Caco-2 (cell line): ENCODE measurements at regions of chr6 and their contacts with region 1.

Region 1: DNA sequence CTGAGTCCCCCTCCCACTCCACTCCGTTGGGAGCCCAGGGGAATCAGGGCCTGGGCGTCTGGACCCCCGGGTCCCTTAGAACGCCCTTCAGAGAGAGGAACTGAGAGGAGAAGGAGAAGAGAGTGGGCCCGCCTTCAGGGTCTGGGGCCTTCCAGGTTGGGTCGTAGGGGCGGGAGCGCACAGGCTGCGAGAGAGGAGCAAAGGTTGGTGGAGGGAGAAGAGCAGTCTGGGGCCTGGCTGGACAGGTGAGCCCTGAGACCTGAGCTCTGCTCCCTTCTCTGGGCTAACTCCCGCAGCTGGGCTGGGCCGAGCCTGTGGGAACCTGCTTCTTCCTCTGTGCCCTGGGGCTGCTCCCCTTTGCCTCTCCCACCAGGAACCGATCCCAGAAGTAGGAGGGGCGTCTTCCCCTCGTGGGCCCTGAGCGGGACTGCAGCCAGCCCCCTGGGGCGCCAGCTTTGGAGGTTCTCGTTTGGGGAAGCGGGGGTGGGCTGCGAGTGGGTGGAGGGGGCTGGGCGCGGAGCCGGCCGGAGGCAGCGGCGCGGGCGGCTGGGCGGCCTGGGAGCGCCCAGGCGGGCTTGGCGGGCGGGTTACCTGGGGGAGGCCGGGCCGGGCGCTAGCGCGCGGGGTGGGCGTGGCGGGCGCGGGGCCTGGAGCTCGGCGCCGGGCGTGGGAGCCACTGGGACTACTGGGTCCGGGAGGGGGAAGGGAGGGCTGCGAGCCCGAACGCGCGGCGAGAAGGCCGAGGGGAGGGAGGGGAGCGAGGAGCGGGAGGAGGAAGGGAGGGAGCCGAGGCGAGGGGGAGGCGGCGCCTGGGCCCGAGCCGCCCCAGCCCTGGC is at the start of gene DDR1:
- DNase-seq: peak; percentile 81 to 82
- H3K4me3 ChIP-seq: peak within 1 kb of the TSS; percentile 46
- H3K4me3 Mint-ChIP-seq: peak within 1 kb of the TSS; percentile 83
- H3K27ac Mint-ChIP-seq: peak within 1 kb of the TSS; percentile 82
- H3K4me1 ChIP-seq: peaks cover 39% of the 10 kb centered on the region
- H3K4me1 Mint-ChIP-seq: peaks cover 43% of the 10 kb centered on the region
- H3K27me3 ChIP-seq: no peaks in the 10 kb centered on the region
- H3K27me3 Mint-ChIP-seq: no peaks in the 10 kb centered on the region
- CTCF ChIP-seq: no peak
- total RNA-seq, gene DDR1: 113 and 115 TPM in 2 replicates

Region 2: DNA sequence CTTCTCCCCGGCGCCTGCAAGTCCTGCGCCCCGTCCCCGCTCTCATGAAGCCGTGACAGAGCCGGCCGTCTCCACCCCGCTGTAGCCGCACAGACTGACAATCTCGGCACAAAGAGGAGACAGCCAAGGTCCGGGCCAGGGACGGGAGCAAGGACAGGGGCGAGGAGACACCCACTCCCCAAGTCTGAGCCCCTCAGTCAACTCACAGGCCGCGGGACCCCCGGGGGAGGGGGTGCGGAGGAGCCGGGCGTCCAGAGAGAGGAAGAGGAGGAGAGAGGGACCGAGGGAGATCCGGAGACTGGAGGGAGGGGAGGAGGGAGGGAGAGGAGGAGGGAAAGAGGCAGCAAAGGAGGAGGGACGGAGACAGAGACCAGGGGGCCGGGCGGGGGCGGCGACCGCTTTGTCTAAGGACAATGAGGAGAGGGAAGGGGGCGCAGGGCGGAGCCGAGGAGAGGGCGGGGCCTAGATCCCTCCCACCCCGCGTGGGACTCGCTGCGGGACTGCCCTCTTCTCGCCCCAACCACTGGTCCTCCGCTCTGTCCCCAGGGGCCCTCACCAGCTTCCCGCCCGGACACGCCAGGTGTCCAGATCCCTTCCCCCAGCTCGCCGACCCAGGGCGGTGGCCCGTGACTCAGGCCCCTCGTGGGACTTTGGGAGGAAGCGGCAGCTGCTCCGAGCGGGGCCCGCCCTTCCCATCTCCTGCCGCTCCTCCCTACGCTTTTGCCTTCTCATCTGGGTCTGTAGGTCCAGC is 196.8 kb before region 1 on chr6:
- CTCF ChIA-PET with region 1: interaction called, 10 read pairs
- POLR2A ChIA-PET with region 1: no interaction called
- intact Hi-C with region 1: no loop called
- DNase-seq: peak; percentile 79 to 86
- H3K4me3 ChIP-seq: peak overlapping the region; percentile 78
- H3K4me3 Mint-ChIP-seq: peak overlapping the region; percentile 82
- H3K27ac Mint-ChIP-seq: peak overlapping the region; percentile 68
- H3K4me1 ChIP-seq: peaks cover 24% of the 10 kb centered on the region
- H3K4me1 Mint-ChIP-seq: peaks cover 44% of the 10 kb centered on the region
- H3K27me3 ChIP-seq: no peaks in the 10 kb centered on the region
- H3K27me3 Mint-ChIP-seq: no peaks in the 10 kb centered on the region
- CTCF ChIP-seq: no peak

Region 3: DNA sequence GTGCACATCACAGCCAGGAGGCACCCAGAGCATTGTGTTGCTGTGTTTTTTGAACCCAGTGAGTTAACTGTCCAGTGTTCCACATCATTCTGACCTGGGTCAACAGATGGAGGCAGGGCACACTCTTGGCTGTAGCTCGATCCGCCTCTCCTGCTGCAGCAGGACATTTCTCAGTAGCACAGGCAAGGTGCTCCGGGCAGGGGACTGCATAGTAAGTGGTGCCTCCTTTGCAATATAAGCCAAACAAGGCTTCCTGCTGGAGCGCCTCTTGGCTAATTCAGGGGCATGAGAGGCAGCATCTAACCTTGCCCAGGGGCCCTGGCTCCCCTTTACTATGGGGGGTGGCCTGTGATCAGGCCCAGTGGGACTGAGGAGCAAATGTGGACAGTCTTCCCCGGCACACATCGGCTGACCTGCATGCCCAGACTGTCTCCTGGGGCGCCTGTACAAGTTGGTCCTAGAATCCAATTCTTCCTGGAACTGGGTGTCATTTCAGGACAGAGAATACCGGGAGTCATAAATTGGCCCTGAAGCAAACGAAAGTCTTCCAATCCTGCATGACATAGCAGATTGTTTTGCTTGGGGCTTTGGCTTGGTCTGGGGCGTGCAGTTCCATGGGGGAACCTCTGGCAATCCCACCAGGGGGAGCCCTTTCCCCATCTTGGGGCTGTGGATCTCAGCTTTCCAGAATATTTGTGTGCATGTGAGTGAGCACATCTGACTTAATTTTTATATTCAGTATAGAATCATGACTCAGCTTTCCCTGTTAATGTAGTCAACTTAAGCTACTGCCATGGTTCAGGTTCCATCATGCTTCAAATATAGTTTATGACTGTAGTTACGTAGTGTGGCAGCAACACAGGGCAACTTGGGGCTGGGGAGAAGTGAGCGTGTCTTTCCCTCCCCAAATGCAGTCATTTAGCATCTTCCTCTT is 55.6 kb before region 1 on chr6:
- CTCF ChIA-PET with region 1: interaction called, 13 read pairs
- POLR2A ChIA-PET with region 1: no interaction called
- intact Hi-C with region 1: no loop called
- DNase-seq: peak; percentile 83 to 91
- H3K4me3 ChIP-seq: no peak overlapping the region
- H3K4me3 Mint-ChIP-seq: no peak overlapping the region
- H3K27ac Mint-ChIP-seq: peak overlapping the region; percentile 43
- H3K4me1 ChIP-seq: peaks cover 16% of the 10 kb centered on the region
- H3K4me1 Mint-ChIP-seq: peaks cover 27% of the 10 kb centered on the region
- H3K27me3 ChIP-seq: no peaks in the 10 kb centered on the region
- H3K27me3 Mint-ChIP-seq: no peaks in the 10 kb centered on the region
- CTCF ChIP-seq: peak; percentile 85 to 89

Region 4: GRCh38 chr6:30907758-30908591 is 24.1 kb after region 1 on chr6 and contains the start of gene GTF2H4:
- CTCF ChIA-PET with region 1: interaction called, 7 read pairs
- POLR2A ChIA-PET with region 1: interaction called, 4 read pairs
- intact Hi-C with region 1: loop called (anchors 2 kb)
- DNase-seq: peak; percentile 95 to 98
- H3K4me3 ChIP-seq: peak within 1 kb of the TSS; percentile 76
- H3K4me3 Mint-ChIP-seq: peak within 1 kb of the TSS; percentile 90
- H3K27ac Mint-ChIP-seq: peak within 1 kb of the TSS; percentile 60
- H3K4me1 ChIP-seq: peaks cover 9% of the 10 kb centered on the region; the same call in 1 of the 2 replicates
- H3K4me1 Mint-ChIP-seq: peaks cover 9% of the 10 kb centered on the region
- H3K27me3 ChIP-seq: no peaks in the 10 kb centered on the region
- H3K27me3 Mint-ChIP-seq: no peaks in the 10 kb centered on the region
- CTCF ChIP-seq: no peak
- total RNA-seq, gene GTF2H4: 40.6 and 43.6 TPM in 2 replicates